ENCODE measurements at regions of chr19 and their contacts with region 1.

Region 1: DNA sequence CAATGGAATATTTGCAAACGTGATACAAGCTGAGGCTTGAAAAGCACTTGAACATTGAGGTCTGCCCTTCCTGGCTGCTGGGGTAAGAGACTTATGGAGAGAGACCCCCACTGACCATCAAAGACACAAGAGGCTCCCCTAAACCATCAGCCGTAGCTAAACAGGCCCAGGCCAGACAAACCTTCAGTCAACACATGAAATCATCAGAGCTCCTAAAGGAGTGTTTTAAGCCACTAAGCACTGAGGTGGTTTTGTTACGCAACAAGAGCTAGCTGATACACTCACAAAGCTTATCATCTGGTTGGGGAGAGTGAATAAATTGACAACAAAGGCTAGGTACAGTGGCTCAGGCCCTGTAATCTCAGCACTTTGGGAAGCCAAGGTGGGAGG is 110.4 kb downstream of the ZNF557 start:
- DNase-seq: no peak
- H3K4me3 ChIP-seq: no peak overlapping the region
- H3K4me3 Mint-ChIP-seq: no peak overlapping the region
- H3K27ac ChIP-seq: no peak overlapping the region
- H3K27ac Mint-ChIP-seq: peak overlapping the region in 1 of 8 donors; percentile 39
- H3K4me1 ChIP-seq: peaks cover 22% of the 10 kb centered on the region
- H3K4me1 Mint-ChIP-seq: peaks cover 20 to 33% (median 31%) of the 10 kb centered on the region in 3 donors
- H3K27me3 ChIP-seq: no peaks in the 10 kb centered on the region
- H3K27me3 Mint-ChIP-seq: peaks cover 4 to 7% of the 10 kb centered on the region in 2 donors

Region 2: DNA sequence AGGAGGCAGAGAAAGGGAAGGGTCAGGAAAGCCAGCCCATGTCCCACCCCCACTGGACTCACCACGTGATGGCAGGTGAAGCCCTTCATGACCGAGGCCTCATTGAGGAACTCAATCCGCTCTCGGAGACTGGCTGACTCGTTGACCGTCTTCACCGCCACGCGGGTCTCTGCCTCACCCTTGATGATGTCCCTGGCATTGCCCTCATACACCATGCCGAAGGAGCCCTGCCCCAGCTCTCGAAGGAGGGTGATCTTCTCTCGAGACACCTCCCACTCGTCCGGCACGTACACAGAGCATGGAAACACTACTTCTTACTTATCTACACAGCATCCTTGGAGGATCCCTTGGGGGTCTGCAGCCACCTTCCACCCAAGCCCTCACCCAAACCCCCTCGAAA is 54.7 kb before region 1 on chr19:
- CTCF ChIA-PET with region 1: no interaction called
- POLR2A ChIA-PET with region 1: no interaction called
- DNase-seq: no peak
- H3K4me3 ChIP-seq: no peak overlapping the region
- H3K4me3 Mint-ChIP-seq: no peak overlapping the region
- H3K27ac ChIP-seq: no peak overlapping the region
- H3K27ac Mint-ChIP-seq: no peak overlapping the region
- H3K4me1 ChIP-seq: no peaks in the 10 kb centered on the region
- H3K4me1 Mint-ChIP-seq: no peaks in the 10 kb centered on the region
- H3K27me3 ChIP-seq: no peaks in the 10 kb centered on the region
- H3K27me3 Mint-ChIP-seq: peaks cover 0 to 11% of the 10 kb centered on the region in 2 donors

Region 3: GRCh38 chr19:7373862-7374261 is 193.9 kb after region 1 on chr19:
- CTCF ChIA-PET with region 1: no interaction called
- POLR2A ChIA-PET with region 1: interaction called, 10 read pairs
- DNase-seq: no peak
- H3K4me3 ChIP-seq: no peak overlapping the region
- H3K4me3 Mint-ChIP-seq: no peak overlapping the region
- H3K27ac ChIP-seq: no peak overlapping the region
- H3K27ac Mint-ChIP-seq: peak overlapping the region in 1 of 8 donors; percentile 54
- H3K4me1 ChIP-seq: no peaks in the 10 kb centered on the region
- H3K4me1 Mint-ChIP-seq: peaks cover 0 to 5% (median 1%) of the 10 kb centered on the region in 3 donors
- H3K27me3 ChIP-seq: no peaks in the 10 kb centered on the region
- H3K27me3 Mint-ChIP-seq: no peaks in the 10 kb centered on the region

Measured in CD8-positive, alpha-beta memory T cell (primary cell).